ENCODE measurements at regions of chr1 and their contacts with region 1.

Region 1: GRCh38 chr1:44213222-44214112 is at the start of gene DMAP1:
- DNase-seq: peak; percentile 89
- H3K4me3 Mint-ChIP-seq: peak within 1 kb of the TSS; percentile 87
- H3K27ac Mint-ChIP-seq: peak within 1 kb of the TSS; percentile 86
- H3K4me1 Mint-ChIP-seq: peaks cover 27% of the 10 kb centered on the region
- H3K27me3 Mint-ChIP-seq: no peaks in the 10 kb centered on the region
- total RNA-seq, gene DMAP1: 35.3 to 41.0 TPM

Region 2: DNA sequence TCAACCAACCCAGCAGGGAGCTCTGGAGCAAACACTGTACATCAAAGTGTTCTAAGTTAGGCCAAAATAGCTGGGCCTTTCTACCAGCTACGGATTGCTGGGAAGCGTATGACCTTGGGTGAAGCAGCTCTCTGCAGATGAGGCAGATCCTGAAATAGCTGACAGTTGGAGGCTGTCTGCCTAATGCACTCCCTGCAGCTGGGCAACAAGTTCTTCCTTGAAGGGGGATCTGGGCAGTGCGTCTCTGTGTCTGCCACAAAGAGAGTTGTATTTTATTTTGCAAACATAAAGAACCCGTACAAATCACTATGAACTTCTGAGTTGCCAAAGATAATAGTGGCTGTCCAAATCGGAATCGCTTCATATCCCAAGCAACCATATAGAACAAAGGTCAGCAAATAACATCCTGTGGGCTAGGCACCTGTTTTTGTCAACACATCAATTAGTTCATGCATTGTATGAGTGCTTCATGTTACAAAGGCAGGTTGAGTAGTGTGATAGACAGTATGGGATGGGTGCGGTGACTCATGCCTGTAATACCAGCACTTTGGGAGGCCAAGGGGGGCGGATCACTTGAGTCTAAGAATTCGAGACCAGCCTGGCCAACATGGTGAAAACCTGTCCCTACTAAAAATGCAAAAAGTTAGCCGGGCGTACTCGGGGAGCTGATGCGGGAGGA is 124.0 kb before region 1 on chr1:
- CTCF ChIA-PET with region 1: interaction called, 4 read pairs
- intact Hi-C with region 1: loop called (anchors 5 kb)
- DNase-seq: no peak
- H3K4me3 Mint-ChIP-seq: no peak overlapping the region
- H3K27ac Mint-ChIP-seq: no peak overlapping the region
- H3K4me1 Mint-ChIP-seq: no peaks in the 10 kb centered on the region
- H3K27me3 Mint-ChIP-seq: peaks cover 12% of the 10 kb centered on the region

Region 3: DNA sequence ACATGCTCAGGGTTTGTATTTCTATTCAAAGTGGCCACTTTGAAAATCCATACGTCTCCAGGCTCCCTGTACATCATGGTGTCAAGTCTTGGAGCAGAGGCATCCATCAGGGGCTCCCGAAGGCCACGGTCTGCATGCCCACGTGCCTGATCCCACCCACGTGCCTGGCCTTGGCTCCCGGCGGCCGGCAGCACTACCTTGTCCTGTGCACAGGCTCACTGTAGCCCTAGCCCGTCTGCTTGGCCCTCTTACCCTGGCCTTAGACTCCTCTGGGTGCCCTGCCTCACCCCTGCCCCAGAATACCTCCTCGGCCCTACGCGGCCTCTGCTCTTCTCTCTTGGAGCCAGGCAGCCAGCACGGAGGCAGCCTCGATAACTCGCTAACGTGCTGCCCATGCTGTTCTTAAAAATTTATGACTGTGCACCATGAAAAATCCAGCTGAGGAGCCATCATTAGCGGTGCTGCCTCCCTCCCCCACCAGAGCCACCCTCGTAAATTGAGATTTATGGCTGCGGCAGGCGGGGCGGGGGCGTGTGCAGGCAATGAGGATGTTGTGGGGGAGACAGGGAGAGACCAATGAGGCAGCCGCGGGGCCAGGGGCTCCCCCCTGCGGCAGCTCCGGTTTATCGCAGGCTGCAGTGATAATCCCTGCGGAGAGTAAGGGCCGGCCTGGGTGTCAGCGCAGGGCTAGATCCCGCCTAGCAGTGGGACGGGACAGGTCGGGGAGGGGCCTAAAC is 24.4 kb after region 1 on chr1:
- CTCF ChIA-PET with region 1: interaction called, 5 read pairs
- intact Hi-C with region 1: loop called (anchors 2 kb)
- DNase-seq: peak; percentile 62
- H3K4me3 Mint-ChIP-seq: no peak overlapping the region
- H3K27ac Mint-ChIP-seq: no peak overlapping the region
- H3K4me1 Mint-ChIP-seq: peaks cover 6% of the 10 kb centered on the region
- H3K27me3 Mint-ChIP-seq: no peaks in the 10 kb centered on the region

Region 4: DNA sequence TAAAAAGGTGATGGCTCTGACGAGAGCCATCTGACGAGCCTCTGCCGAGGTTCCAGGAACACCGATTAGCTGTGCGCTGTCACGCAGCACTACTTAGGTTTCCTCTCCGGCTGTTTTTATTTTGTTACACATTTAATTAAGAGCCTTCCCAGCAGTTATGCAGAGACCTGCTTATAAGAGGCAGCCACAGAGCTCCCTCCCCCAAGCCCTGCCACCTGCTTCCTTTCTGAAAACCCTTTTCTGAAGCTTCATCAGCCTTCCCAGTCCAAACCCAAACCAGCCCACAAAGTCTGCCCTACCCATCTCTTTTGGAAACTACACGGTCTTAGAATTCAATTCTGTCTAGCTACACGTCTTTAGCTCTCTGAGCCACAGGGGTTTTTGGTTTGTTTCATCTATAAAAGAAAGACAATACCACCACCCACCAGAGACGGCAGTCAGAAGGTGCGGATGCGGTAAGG is 92.5 kb after region 1 on chr1:
- CTCF ChIA-PET with region 1: interaction called, 6 read pairs
- intact Hi-C with region 1: loop called (anchors 2 kb)
- DNase-seq: peak; percentile 82
- H3K4me3 Mint-ChIP-seq: peak overlapping the region; percentile 26
- H3K27ac Mint-ChIP-seq: peak overlapping the region; percentile 95
- H3K4me1 Mint-ChIP-seq: peaks cover 34% of the 10 kb centered on the region
- H3K27me3 Mint-ChIP-seq: no peaks in the 10 kb centered on the region

Region 5: DNA sequence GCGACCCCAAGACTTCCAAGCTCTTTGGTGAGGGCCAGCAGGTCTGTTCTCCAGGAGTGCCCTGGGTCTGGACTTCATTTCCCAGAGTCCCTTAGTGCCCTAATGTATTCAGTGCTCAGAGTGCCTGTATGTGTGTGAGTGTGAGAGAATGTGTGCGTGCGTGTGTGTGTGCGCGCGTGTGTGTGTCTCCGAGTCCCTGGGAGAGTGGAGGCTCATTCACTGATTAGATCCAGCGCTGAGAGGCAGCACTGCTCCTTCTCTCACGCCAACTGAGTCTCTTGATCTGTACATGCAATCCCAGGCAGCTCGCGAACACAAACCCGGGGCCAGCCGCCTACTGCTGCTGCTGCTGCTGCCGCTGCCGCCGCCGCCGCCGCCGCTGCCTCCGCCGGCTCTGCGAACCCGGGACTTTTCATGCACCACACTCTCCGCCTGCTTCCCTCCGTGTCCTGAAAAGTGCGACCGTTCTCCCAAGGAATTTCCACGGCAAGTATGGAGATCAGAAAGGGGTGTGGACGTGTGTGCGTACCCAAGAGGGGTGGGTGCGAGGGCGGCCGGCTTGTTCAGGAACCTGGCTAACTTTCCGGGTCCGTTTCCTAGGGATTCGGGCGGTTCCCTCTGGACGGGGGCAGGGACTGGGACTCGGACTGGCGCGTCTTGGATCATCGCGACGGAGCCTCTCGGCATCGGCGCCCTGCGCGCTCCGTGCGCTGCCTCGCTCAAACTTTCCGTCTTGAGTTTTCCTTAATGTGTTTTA is 191.8 kb after region 1 on chr1 and contains the start of gene RNF220:
- CTCF ChIA-PET with region 1: interaction called, 3 read pairs
- intact Hi-C with region 1: loop called (anchors 5 kb)
- DNase-seq: peak; percentile 64
- H3K4me3 Mint-ChIP-seq: peak within 1 kb of the TSS; percentile 79
- H3K27ac Mint-ChIP-seq: peak within 1 kb of the TSS; percentile 22
- H3K4me1 Mint-ChIP-seq: peaks cover 30% of the 10 kb centered on the region
- H3K27me3 Mint-ChIP-seq: peaks cover 70% of the 10 kb centered on the region
- total RNA-seq, gene RNF220: 71.6 to 81.6 TPM

Region 6: GRCh38 chr1:44652445-44653106 is 439.1 kb after region 1 on chr1:
- CTCF ChIA-PET with region 1: interaction called, 4 read pairs
- intact Hi-C with region 1: loop called (anchors 1 kb)
- DNase-seq: peak; percentile 83
- H3K4me3 Mint-ChIP-seq: no peak overlapping the region
- H3K27ac Mint-ChIP-seq: no peak overlapping the region
- H3K4me1 Mint-ChIP-seq: no peaks in the 10 kb centered on the region
- H3K27me3 Mint-ChIP-seq: no peaks in the 10 kb centered on the region

Measured in activated naive CD4-positive, alpha-beta T cell treated with anti-CD3 and anti-CD28 coated beads for 36 hours (primary cell).